Aorta (tissue), 5 donors: ENCODE measurements at regions of chr2 and their contacts with region 1.

Region 1: DNA sequence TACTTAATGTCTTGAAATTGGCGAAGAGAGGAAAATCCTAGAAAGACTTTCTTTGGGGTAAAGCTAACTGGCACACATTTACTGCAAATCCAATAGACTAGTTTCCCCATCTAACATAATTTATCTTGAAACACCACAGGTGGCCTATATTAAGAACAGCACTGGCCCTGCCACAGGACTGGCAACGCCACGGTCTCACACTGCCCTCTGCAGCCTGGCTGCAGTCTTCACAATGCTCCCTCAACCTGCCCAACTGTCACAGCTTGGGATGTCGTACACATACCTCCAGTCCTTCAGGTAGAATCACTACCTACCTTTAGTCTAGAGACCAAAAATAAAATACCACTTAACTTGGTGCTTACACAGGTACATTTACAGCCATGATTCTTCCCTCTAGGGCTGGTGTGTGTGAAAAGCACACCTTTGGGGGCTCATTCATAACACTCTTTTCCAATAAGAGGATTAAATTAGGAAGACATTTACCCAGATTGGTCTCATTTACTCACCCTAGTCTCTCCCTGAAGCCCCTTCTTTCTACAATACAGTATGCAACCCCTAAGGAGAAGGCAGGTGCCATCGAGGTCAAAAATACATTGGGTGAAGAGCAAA is 222.2 kb downstream of the C1D start:
- DNase-seq: peak; percentile 71 to 87
- ATAC-seq: peak; percentile 90
- H3K4me3 ChIP-seq: no peak overlapping the region
- H3K27ac ChIP-seq: no peak overlapping the region
- H3K4me1 ChIP-seq: peaks cover 0 to 1% of the 10 kb centered on the region in 2 donors
- H3K27me3 ChIP-seq: no peaks in the 10 kb centered on the region

Region 2: DNA sequence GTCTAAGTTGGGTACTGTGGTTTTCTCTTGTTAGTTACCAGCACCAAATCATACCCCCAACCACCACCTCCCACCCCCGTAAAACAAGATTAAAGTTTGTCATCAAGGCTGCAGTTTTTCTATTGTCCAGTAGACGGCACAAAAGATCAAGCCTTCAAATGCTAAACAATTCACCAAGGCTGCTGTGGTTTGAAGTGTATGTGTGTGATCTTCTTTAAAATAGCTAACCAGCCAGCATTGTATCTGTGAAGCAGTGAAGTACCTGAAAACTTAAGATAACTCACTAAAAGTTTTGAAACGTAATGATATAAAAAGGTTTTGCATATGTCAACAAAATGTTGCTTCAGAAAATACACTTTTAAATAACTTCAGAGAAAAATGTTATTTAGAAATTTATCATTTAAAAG is 1411.5 kb before region 1 on chr2:
- intact Hi-C with region 1: loop called (anchors 2 to 5 kb)
- DNase-seq: no peak
- ATAC-seq: no peak
- H3K4me3 ChIP-seq: no peak overlapping the region
- H3K27ac ChIP-seq: no peak overlapping the region
- H3K4me1 ChIP-seq: no peaks in the 10 kb centered on the region
- H3K27me3 ChIP-seq: no peaks in the 10 kb centered on the region

Region 3: GRCh38 chr2:66587216-66587615 is 1253.3 kb before region 1 on chr2:
- intact Hi-C with region 1: loop called in 1 of 2 experiments (anchors 10 kb)
- DNase-seq: no peak
- ATAC-seq: no peak
- H3K4me3 ChIP-seq: no peak overlapping the region
- H3K27ac ChIP-seq: no peak overlapping the region
- H3K4me1 ChIP-seq: no peaks in the 10 kb centered on the region
- H3K27me3 ChIP-seq: no peaks in the 10 kb centered on the region

Region 4: GRCh38 chr2:67322353-67323001 is 518.1 kb before region 1 on chr2:
- intact Hi-C with region 1: loop called in 1 of 2 experiments (anchors 5 kb)
- DNase-seq: peak; percentile 60 to 75
- ATAC-seq: peak; percentile 81
- H3K4me3 ChIP-seq: no peak overlapping the region
- H3K27ac ChIP-seq: peak overlapping the region in 1 of 2 donors; percentile 79
- H3K4me1 ChIP-seq: no peaks in the 10 kb centered on the region
- H3K27me3 ChIP-seq: no peaks in the 10 kb centered on the region

Region 5: GRCh38 chr2:67660871-67661270 is 179.7 kb before region 1 on chr2:
- intact Hi-C with region 1: loop called in 1 of 2 experiments (anchors 5 kb)
- DNase-seq: no peak
- ATAC-seq: no peak
- H3K4me3 ChIP-seq: no peak overlapping the region
- H3K27ac ChIP-seq: peak overlapping the region in 1 of 2 donors; percentile 15
- H3K4me1 ChIP-seq: peaks cover 3 to 5% of the 10 kb centered on the region in 2 donors
- H3K27me3 ChIP-seq: no peaks in the 10 kb centered on the region